ENCODE measurements at regions of chr5 and their contacts with region 1.

Region 1: GRCh38 chr5:128083033-128083810 is at the start of gene SLC12A2:
- DNase-seq: peak; percentile 85 to 98 (median 97)
- ATAC-seq: peak; percentile 83
- H3K4me3 ChIP-seq: peak within 1 kb of the TSS; percentile 76
- H3K4me3 Mint-ChIP-seq: peak within 1 kb of the TSS; percentile 89 to 97 (median 94)
- H3K27ac ChIP-seq: peak within 1 kb of the TSS; percentile 89
- H3K27ac Mint-ChIP-seq: peak within 1 kb of the TSS; percentile 89 to 98 (median 92)
- H3K4me1 ChIP-seq: peaks cover 20 to 41% of the 10 kb centered on the region in 2 donors
- H3K4me1 Mint-ChIP-seq: peaks cover 44 to 78% (median 69%) of the 10 kb centered on the region in 7 donors
- H3K27me3 ChIP-seq: no peaks in the 10 kb centered on the region
- H3K27me3 Mint-ChIP-seq: no peaks in the 10 kb centered on the region
- total RNA-seq, gene SLC12A2: 8.2 to 17.3 (median 11.3) TPM

Region 2: DNA sequence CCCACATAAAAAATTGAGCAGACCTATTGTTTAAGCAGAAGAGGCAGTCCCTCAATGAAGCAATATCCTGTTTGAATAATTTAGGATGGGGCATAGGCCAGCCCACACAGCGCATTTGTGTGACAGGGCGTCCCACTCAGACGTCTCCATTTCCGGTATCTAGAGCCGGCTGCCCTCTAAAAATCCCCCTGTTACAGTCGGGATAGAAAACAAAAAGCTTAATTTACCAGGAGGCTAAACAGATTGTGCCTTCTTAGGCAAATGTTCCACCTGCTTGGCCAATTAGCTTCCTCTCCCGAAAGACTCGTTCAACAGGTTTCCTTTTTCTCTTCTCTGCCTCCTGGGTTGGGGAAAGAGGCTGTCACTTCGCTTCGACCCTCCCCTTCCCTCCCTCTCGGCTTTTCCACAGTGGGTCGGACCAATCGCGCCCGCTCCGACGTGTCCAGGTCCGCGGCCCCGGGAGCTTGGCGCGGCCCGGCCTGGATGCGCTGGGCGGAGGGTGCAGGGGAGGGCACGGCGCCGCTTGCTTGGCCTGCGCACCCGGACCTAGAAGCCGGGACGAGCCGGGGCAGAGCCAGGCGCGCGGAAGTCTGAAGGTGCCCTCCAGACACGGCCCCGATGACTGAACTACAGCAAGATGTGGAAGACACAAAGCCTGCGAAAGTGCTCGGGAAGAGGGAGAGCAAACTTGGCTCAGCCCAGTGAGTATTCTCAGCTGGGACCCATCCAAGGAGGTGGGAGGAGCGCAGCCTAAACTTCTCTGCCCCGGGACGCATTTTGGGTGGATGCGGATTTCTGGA is 1660.0 kb before region 1 on chr5 and contains the start of gene GRAMD2B:
- CTCF ChIA-PET with region 1: no interaction called
- POLR2A ChIA-PET with region 1: no interaction called
- intact Hi-C with region 1: loop called in 1 of 2 experiments (anchors 2 kb)
- DNase-seq: peak; percentile 27 to 80 (median 76)
- ATAC-seq: peak; percentile 96
- H3K4me3 ChIP-seq: peak within 1 kb of the TSS; percentile 78
- H3K4me3 Mint-ChIP-seq: peak within 1 kb of the TSS; percentile 85 to 94 (median 94)
- H3K27ac ChIP-seq: peak within 1 kb of the TSS; percentile 100
- H3K27ac Mint-ChIP-seq: peak within 1 kb of the TSS; percentile 85 to 96 (median 95)
- H3K4me1 ChIP-seq: peaks cover 8 to 13% of the 10 kb centered on the region in 2 donors
- H3K4me1 Mint-ChIP-seq: peaks cover 22 to 42% (median 33%) of the 10 kb centered on the region in 7 donors
- H3K27me3 ChIP-seq: no peaks in the 10 kb centered on the region
- H3K27me3 Mint-ChIP-seq: no peaks in the 10 kb centered on the region
- total RNA-seq, gene GRAMD2B: 5.2 to 9.6 (median 7.1) TPM

Region 3: GRCh38 chr5:126600631-126601511 is 1482.4 kb before region 1 on chr5 and contains the start of gene PHAX:
- CTCF ChIA-PET with region 1: no interaction called
- POLR2A ChIA-PET with region 1: no interaction called
- intact Hi-C with region 1: loop called (anchors 2 to 10 kb)
- DNase-seq: peak; percentile 59 to 82 (median 70)
- ATAC-seq: peak; percentile 95
- H3K4me3 ChIP-seq: peak within 1 kb of the TSS; percentile 84
- H3K4me3 Mint-ChIP-seq: peak within 1 kb of the TSS; percentile 84 to 99 (median 96)
- H3K27ac ChIP-seq: peak within 1 kb of the TSS; percentile 78
- H3K27ac Mint-ChIP-seq: peak within 1 kb of the TSS; percentile 86 to 98 (median 93)
- H3K4me1 ChIP-seq: peaks cover 14 to 15% of the 10 kb centered on the region in 2 donors
- H3K4me1 Mint-ChIP-seq: peaks cover 12 to 42% (median 35%) of the 10 kb centered on the region in 7 donors
- H3K27me3 ChIP-seq: no peaks in the 10 kb centered on the region
- H3K27me3 Mint-ChIP-seq: peaks cover 0 to 10% (median 0%) of the 10 kb centered on the region in 5 donors
- total RNA-seq, gene PHAX: 14.5 to 40.9 (median 35.4) TPM

Region 4: DNA sequence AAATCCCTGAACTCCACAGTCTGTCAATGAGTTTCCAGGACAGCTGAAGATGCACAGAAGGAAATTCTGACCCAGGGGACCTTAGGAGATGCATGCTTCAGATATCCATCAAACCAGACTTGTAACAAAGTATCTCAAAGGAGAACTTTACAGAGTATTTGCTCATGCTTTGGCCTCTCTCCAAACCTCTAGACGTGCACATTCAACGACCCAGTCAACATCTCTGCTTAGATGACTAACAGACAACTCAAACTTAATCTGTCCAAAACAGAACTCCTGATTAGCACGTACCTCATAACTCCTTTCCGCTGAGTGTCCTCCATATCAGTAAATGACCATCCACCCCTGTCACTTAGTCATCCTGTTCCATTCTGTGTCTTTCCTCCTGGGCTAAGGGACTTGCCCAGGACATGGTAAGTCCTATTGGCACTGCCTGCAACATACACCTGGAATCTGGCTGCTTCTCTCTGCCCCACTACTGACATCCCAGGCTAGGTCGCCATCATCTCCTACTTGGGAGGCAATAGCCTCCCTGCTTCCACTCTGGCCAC is 1198.9 kb before region 1 on chr5:
- CTCF ChIA-PET with region 1: no interaction called
- POLR2A ChIA-PET with region 1: no interaction called
- intact Hi-C with region 1: no loop called
- DNase-seq: no peak
- ATAC-seq: no peak
- H3K4me3 ChIP-seq: no peak overlapping the region
- H3K4me3 Mint-ChIP-seq: no peak overlapping the region
- H3K27ac ChIP-seq: no peak overlapping the region
- H3K27ac Mint-ChIP-seq: peak overlapping the region in 2 of 9 donors; percentile 16 to 29
- H3K4me1 ChIP-seq: no peaks in the 10 kb centered on the region
- H3K4me1 Mint-ChIP-seq: peaks cover 0 to 8% (median 3%) of the 10 kb centered on the region in 7 donors
- H3K27me3 ChIP-seq: no peaks in the 10 kb centered on the region
- H3K27me3 Mint-ChIP-seq: no peaks in the 10 kb centered on the region

Region 5: DNA sequence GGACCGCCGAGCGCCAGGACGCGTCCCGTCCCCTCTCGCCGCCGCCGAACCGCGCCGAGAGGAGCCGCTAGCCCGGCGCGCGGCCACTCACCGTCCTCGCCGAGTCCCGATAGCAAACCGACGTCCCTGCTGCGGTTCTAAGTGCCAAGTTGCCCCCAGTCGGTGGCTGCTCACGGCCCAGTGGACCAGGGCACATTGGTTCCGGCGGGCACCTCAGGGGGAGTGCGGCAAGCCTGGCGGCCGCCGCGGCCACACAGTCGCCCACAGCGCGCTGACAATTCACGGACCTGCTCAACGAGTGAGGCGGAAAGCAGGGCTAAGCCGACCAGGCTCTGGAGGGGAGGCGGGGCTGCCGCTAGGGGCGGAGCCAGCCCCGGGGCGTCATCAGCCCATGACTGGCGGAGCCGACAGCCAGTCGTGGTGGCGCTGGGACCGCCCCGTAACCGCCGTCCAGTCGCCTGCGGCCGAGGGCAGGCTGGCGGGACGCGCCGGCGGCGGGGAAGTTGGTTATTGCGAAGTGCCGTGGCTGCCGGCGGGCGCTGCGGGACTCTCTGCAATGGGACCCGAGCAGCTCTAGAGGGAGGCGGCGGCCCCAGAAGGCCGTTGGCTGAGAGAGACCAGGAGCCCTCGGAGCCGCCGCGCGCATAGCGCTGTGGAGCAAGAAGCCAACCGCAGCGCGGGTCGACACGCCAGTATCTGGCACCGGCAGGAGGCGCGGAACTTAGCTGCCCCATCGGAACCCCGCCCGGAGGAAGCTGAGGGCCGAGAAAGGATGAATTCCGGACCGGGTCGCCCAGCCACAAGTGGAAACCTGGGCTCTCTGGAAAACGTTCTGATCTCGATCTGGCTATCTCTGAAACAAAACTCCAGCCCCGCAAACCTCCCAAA is 1052.7 kb before region 1 on chr5 and contains the start of gene MARCHF3:
- CTCF ChIA-PET with region 1: no interaction called
- POLR2A ChIA-PET with region 1: no interaction called
- intact Hi-C with region 1: loop called (anchors 1 kb)
- DNase-seq: peak; percentile 91 to 98 (median 94)
- ATAC-seq: peak; percentile 98
- H3K4me3 ChIP-seq: peak within 1 kb of the TSS; percentile 79
- H3K4me3 Mint-ChIP-seq: peak within 1 kb of the TSS; percentile 83 to 96 (median 92)
- H3K27ac ChIP-seq: peak within 1 kb of the TSS; percentile 78
- H3K27ac Mint-ChIP-seq: peak within 1 kb of the TSS; percentile 42 to 93 (median 82)
- H3K4me1 ChIP-seq: peaks cover 0 to 10% of the 10 kb centered on the region in 2 donors
- H3K4me1 Mint-ChIP-seq: peaks cover 17 to 38% (median 28%) of the 10 kb centered on the region in 7 donors
- H3K27me3 ChIP-seq: no peaks in the 10 kb centered on the region
- H3K27me3 Mint-ChIP-seq: peaks cover 0 to 56% (median 0%) of the 10 kb centered on the region in 5 donors
- total RNA-seq, gene MARCHF3: 3.1 to 15.4 (median 13.0) TPM

Region 6: DNA sequence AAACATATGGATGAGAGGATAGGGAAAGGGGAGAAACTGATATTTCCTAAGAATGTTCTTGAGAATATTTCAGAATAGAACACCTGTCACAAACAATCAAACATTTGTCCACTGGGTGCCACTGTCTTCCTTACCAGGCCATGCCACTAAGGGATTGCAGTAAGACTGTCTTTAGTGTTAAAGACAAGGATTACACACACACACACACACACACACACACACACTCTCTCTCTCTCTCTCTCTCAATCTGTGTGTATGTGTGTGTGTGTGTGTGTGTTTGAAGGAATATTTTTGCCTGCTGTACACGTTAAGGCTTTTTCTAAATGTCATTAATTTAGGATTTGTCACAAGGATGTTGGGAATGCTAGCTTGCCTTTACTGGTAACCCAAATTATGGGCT is 325.6 kb before region 1 on chr5:
- CTCF ChIA-PET with region 1: no interaction called
- POLR2A ChIA-PET with region 1: no interaction called
- intact Hi-C with region 1: loop called (anchors 5 to 10 kb)
- DNase-seq: peak in 1 of 9 donors; percentile 13
- ATAC-seq: peak; percentile 64
- H3K4me3 ChIP-seq: no peak overlapping the region
- H3K4me3 Mint-ChIP-seq: no peak overlapping the region
- H3K27ac ChIP-seq: no peak overlapping the region
- H3K27ac Mint-ChIP-seq: peak overlapping the region in 1 of 9 donors; percentile 2
- H3K4me1 ChIP-seq: no peaks in the 10 kb centered on the region
- H3K4me1 Mint-ChIP-seq: peaks cover 0 to 3% (median 0%) of the 10 kb centered on the region in 7 donors
- H3K27me3 ChIP-seq: no peaks in the 10 kb centered on the region
- H3K27me3 Mint-ChIP-seq: peaks cover 0 to 15% (median 0%) of the 10 kb centered on the region in 5 donors

Region 7: GRCh38 chr5:127909078-127909477 is 174.1 kb before region 1 on chr5:
- CTCF ChIA-PET with region 1: no interaction called
- POLR2A ChIA-PET with region 1: no interaction called
- intact Hi-C with region 1: loop called (anchors 1 to 5 kb)
- DNase-seq: peak in 2 of 9 donors; percentile 1 to 12
- ATAC-seq: peak; percentile 61
- H3K4me3 ChIP-seq: no peak overlapping the region
- H3K4me3 Mint-ChIP-seq: no peak overlapping the region
- H3K27ac ChIP-seq: no peak overlapping the region
- H3K27ac Mint-ChIP-seq: no peak overlapping the region
- H3K4me1 ChIP-seq: no peaks in the 10 kb centered on the region
- H3K4me1 Mint-ChIP-seq: peaks cover 0 to 2% (median 0%) of the 10 kb centered on the region in 7 donors
- H3K27me3 ChIP-seq: no peaks in the 10 kb centered on the region
- H3K27me3 Mint-ChIP-seq: peaks cover 0 to 13% (median 7%) of the 10 kb centered on the region in 5 donors

Region 8: DNA sequence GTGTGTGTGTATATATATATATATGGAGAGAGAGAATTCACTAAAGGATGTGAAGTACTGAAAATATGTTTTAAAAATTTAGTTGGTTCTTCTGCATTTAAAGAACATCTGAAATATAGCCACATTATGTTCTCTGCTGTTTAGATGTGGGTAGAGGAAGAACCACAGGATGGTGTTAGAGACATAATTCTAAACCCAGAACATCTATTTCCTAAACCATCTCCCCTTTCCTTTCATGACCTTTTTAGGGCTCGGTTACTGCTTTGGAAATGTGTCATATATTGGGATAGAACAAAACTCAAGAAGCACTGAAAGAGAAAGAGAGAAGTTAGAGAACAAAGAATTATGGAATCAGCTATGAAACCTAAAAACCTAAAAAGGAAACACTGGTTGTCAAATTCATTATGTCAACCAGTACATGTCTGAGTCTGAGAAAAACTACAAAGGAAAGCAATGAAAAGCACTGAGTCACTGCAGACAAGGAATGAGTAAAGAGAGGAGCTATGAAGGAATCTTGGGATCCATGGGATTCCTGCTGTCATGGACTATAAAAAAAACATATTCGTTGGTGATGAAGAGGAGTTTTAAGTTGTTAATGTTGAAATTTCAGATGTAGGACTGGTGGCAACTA is 28.7 kb after region 1 on chr5:
- CTCF ChIA-PET with region 1: no interaction called
- POLR2A ChIA-PET with region 1: no interaction called
- intact Hi-C with region 1: no loop called
- DNase-seq: no peak
- ATAC-seq: no peak
- H3K4me3 ChIP-seq: no peak overlapping the region
- H3K4me3 Mint-ChIP-seq: no peak overlapping the region
- H3K27ac ChIP-seq: no peak overlapping the region
- H3K27ac Mint-ChIP-seq: no peak overlapping the region
- H3K4me1 ChIP-seq: no peaks in the 10 kb centered on the region
- H3K4me1 Mint-ChIP-seq: peaks cover 2 to 10% (median 9%) of the 10 kb centered on the region in 7 donors
- H3K27me3 ChIP-seq: no peaks in the 10 kb centered on the region
- H3K27me3 Mint-ChIP-seq: no peaks in the 10 kb centered on the region

Region 9: GRCh38 chr5:128135286-128135685 is 52.1 kb after region 1 on chr5:
- CTCF ChIA-PET with region 1: no interaction called
- POLR2A ChIA-PET with region 1: interaction called, 3 read pairs
- intact Hi-C with region 1: loop called in 1 of 2 experiments (anchors 5 kb)
- DNase-seq: no peak
- ATAC-seq: no peak
- H3K4me3 ChIP-seq: no peak overlapping the region
- H3K4me3 Mint-ChIP-seq: no peak overlapping the region
- H3K27ac ChIP-seq: no peak overlapping the region
- H3K27ac Mint-ChIP-seq: no peak overlapping the region
- H3K4me1 ChIP-seq: no peaks in the 10 kb centered on the region
- H3K4me1 Mint-ChIP-seq: peaks cover 0 to 5% (median 0%) of the 10 kb centered on the region in 7 donors
- H3K27me3 ChIP-seq: no peaks in the 10 kb centered on the region
- H3K27me3 Mint-ChIP-seq: no peaks in the 10 kb centered on the region

Measured in naive thymus-derived CD4-positive, alpha-beta T cell (primary cell).